Endothelial cell of umbilical vein (primary cell): ENCODE measurements at regions of chr12 and their contacts with region 1.

Region 1: DNA sequence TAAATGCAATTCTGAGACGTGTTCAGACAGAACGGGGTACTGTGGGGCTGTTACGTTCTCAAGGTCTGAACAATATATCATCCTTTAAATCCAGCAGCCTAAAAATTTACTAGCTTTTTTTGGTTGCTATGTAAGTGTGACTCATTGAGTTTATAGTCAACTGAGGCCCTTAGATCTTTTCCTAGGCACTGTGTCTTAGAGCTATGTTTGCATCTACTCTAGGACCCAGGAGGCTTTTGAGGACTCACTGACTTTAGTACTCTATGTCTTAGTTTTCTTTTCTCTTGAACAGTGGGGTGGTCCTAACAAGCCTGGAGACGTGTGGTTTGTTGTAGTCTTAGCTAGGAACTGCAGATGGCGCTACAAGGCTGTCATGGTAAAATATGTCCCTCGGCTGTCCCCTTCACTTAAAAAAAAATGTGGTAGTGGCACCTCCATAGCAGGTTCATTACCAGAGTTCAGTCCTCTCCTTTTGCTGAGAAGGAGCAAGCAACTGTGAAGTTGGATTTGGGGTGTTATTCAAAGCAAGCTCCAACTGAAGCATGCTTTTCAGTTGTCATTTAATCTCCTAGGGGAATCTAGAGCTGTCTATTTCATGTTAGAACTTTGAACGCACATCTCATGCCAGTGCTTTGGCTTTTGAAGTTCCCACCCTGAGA is 8.7 kb upstream of the SPATS2 start:
- DNase-seq: peak; percentile 82
- H3K4me3 ChIP-seq: no peak overlapping the region
- H3K27ac ChIP-seq: no peak overlapping the region
- H3K4me1 ChIP-seq: no peaks in the 10 kb centered on the region
- H3K27me3 ChIP-seq: no peaks in the 10 kb centered on the region
- CTCF ChIP-seq: peak; percentile 74 to 76
- POLR2A ChIP-seq: no peak

Region 2: DNA sequence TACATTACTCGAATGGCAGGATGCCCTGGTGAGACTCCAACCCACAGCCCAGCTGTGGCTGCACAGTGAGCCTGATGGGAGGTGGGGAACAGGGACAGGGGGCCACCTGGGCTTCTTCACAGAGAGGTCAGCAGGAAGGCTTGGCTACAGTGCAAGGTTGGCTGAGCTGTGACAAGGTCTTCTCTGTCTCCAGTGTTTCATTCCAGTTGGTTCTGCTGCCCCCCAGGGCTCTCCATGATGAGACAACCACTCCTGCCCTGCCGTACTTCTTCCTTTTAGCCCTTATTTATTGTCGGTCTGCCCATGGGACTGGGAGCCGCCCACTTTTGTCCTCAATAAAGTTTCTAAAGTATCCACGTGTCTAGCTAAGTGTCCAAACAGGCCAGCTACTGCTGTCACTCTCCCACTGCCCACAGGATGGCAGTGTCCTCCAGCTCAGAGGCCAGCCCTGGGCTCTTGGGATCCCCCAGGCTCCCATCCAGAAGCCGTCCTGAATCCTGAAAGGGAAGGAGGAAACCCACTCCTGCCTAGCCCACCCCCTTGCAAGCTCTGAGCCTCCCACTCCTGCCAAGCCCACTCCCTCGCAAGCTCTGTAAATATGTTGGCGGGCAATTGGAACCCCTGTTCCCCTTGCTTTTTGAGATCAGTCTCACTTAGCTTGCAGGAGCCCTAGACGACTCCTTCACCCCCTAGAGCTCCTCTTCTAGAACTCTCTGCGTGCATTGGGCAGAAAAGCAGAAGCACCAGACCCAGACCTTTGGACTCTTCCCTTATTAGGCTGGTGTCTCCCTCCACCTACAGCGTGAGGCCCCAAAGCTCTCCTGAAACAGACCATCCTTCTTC is 27.0 kb before region 1 on chr12:
- CTCF ChIA-PET with region 1: interaction called, 204 read pairs
- POLR2A ChIA-PET with region 1: no interaction called
- dilution Hi-C with region 1: no loop called
- intact Hi-C with region 1: loop called (anchors 1 kb)
- DNase-seq: peak; percentile 75
- H3K4me3 ChIP-seq: no peak overlapping the region
- H3K27ac ChIP-seq: no peak overlapping the region
- H3K4me1 ChIP-seq: no peaks in the 10 kb centered on the region
- H3K27me3 ChIP-seq: peaks cover 33% of the 10 kb centered on the region in 2 experiments
- CTCF ChIP-seq: peak; percentile 81 to 86
- POLR2A ChIP-seq: no peak

Region 3: DNA sequence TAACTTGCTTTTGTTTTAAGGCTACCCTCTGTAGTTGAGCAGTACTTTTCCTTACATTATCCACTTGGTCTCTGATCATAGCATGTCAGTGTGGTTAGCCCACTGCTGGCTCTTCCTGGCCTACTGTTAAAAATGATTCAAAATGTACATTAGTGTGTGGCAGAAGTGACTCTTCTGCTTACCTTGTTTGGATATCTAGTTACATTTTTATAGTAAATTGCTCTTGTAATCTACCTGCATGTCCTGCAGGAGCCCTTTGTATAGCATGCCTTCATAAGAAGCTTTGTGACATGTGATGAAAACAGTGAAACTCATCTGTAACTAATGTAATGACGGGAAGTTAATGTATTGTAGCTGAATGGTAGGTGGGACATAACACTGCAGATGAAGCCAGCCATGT is 16.8 kb after region 1 on chr12:
- CTCF ChIA-PET with region 1: interaction called, 74 read pairs
- POLR2A ChIA-PET with region 1: no interaction called
- dilution Hi-C with region 1: no loop called
- intact Hi-C with region 1: no loop called
- DNase-seq: no peak
- H3K4me3 ChIP-seq: no peak overlapping the region
- H3K27ac ChIP-seq: no peak overlapping the region
- H3K4me1 ChIP-seq: no peaks in the 10 kb centered on the region
- H3K27me3 ChIP-seq: no peaks in the 10 kb centered on the region
- CTCF ChIP-seq: no peak
- POLR2A ChIP-seq: no peak

Region 4: GRCh38 chr12:49482095-49483051 is 123.8 kb after region 1 on chr12:
- CTCF ChIA-PET with region 1: interaction called, 27 read pairs
- POLR2A ChIA-PET with region 1: no interaction called
- dilution Hi-C with region 1: no loop called
- intact Hi-C with region 1: no loop called
- DNase-seq: no peak
- H3K4me3 ChIP-seq: no peak overlapping the region
- H3K27ac ChIP-seq: peak overlapping the region; percentile 62
- H3K4me1 ChIP-seq: peaks cover 24% of the 10 kb centered on the region
- H3K27me3 ChIP-seq: no peaks in the 10 kb centered on the region
- CTCF ChIP-seq: no peak
- POLR2A ChIP-seq: no peak

Region 5: DNA sequence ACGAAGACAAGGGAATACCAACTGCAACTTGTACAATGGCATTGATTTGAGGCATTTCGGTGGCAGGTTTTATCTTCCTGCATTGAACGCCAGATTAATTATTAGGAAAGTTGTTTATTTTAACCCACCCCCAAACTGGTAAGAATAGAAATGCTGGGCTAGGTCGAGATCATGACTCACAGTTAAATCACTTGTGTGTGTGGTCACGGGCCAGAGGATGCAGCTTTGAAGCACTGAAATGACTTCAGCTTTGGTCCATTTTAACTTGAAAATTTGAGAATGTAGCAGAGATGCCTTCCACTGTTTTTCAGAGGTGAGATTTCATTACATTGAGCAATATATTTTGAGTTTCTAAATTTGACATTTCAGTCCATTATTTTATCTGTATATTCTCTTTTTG is 156.7 kb after region 1 on chr12:
- CTCF ChIA-PET with region 1: interaction called, 679 read pairs
- POLR2A ChIA-PET with region 1: interaction called, 4 read pairs
- dilution Hi-C with region 1: loop called (anchors 25 kb)
- intact Hi-C with region 1: loop called (anchors 1 kb)
- DNase-seq: peak; percentile 83
- H3K4me3 ChIP-seq: no peak overlapping the region
- H3K27ac ChIP-seq: peak overlapping the region; percentile 62
- H3K4me1 ChIP-seq: peaks cover 38% of the 10 kb centered on the region
- H3K27me3 ChIP-seq: no peaks in the 10 kb centered on the region
- CTCF ChIP-seq: no peak
- POLR2A ChIP-seq: no peak

Region 6: GRCh38 chr12:49567611-49568441 is 209.2 kb after region 1 on chr12 and contains the start of gene MCRS1:
- CTCF ChIA-PET with region 1: interaction called, 10 read pairs
- POLR2A ChIA-PET with region 1: no interaction called
- dilution Hi-C with region 1: no loop called
- intact Hi-C with region 1: loop called (anchors 5 kb)
- DNase-seq: peak; percentile 94
- H3K4me3 ChIP-seq: peak within 1 kb of the TSS; percentile 64 to 86 (median 82)
- H3K27ac ChIP-seq: peak within 1 kb of the TSS; percentile 80
- H3K4me1 ChIP-seq: peaks cover 14% of the 10 kb centered on the region
- H3K27me3 ChIP-seq: no peaks in the 10 kb centered on the region
- CTCF ChIP-seq: no peak
- POLR2A ChIP-seq: peak; percentile 96
- total RNA-seq, gene MCRS1: 71.1 and 78.5 TPM in 2 replicates